Prostate gland (tissue), 2 donors: ENCODE measurements at regions of chr11 and their contacts with region 1.

Region 1: GRCh38 chr11:15101072-15101709 is 13.5 kb upstream of the INSC start:
- DNase-seq: peak; percentile 45
- H3K4me3 ChIP-seq: no peak overlapping the region
- H3K27ac ChIP-seq: no peak overlapping the region
- H3K4me1 ChIP-seq: no peaks in the 10 kb centered on the region
- H3K27me3 ChIP-seq: no peaks in the 10 kb centered on the region
- CTCF ChIP-seq: peak; percentile 54 to 87 (median 80)
- POLR2A ChIP-seq: no peak

Region 2: GRCh38 chr11:15208378-15209222 is 107.4 kb after region 1 on chr11:
- intact Hi-C with region 1: loop called (anchors 2 kb)
- DNase-seq: peak; percentile 58
- H3K4me3 ChIP-seq: no peak overlapping the region
- H3K27ac ChIP-seq: no peak overlapping the region
- H3K4me1 ChIP-seq: no peaks in the 10 kb centered on the region
- H3K27me3 ChIP-seq: no peaks in the 10 kb centered on the region
- CTCF ChIP-seq: peak; percentile 85 to 91 (median 90)
- POLR2A ChIP-seq: no peak

Region 3: GRCh38 chr11:15289723-15290122 is 188.5 kb after region 1 on chr11:
- intact Hi-C with region 1: no loop called
- DNase-seq: no peak
- H3K4me3 ChIP-seq: no peak overlapping the region
- H3K27ac ChIP-seq: no peak overlapping the region
- H3K4me1 ChIP-seq: no peaks in the 10 kb centered on the region
- H3K27me3 ChIP-seq: no peaks in the 10 kb centered on the region
- CTCF ChIP-seq: no peak
- POLR2A ChIP-seq: no peak